ENCODE measurements at regions of chr6 and their contacts with region 1.

Region 1: DNA sequence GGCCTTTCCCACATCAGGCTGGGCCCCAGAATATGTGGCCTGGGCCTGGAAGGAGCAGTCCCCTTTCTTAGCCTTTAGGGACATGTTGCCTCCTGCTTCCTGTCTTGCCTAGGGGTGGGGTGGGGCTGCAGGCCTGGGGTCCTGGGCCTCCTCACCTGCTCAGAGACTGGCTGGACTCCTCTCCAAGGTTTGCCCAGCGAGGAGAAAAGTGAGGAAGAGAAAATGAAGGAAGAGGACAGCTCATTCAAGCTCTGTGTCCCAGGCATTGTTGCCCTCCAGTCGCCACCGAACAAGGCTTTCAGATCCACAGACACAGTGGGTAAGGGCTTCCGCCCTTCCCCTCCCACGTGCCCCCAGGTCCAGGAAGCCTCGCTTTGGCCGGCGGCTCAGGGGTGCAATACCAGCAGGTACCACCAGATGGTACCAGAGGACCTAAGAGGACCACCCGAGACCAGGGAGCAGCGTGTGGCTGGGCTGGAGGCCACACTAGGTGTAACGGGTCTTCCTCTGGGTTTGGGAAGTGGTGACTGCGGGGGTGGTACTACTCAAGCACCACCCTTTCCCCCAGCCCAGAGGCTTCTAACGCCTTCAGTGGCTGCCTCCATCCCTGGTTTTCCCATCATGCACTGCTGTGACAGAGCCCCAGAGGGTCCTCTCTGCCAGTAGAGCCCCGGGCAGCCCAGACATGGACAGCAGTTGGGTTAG is 5.5 kb upstream of the BAK1 start:
- DNase-seq: peak; percentile 83 to 84
- ATAC-seq: peak; percentile 59 to 73 (median 68)
- H3K4me3 ChIP-seq: peak overlapping the region in 4 of 10 donors; percentile 8 to 23 (median 16)
- H3K27ac ChIP-seq: peak overlapping the region in 8 of 10 donors; percentile 2 to 58 (median 30)
- H3K4me1 ChIP-seq: peaks cover 12 to 40% (median 31%) of the 10 kb centered on the region in 9 donors
- H3K27me3 ChIP-seq: no peaks in the 10 kb centered on the region
- CTCF ChIP-seq: peak; percentile 96 to 100 (median 99)

Region 2: GRCh38 chr6:33607784-33608161 is 22.2 kb after region 1 on chr6:
- intact Hi-C with region 1: loop called in 2 of 10 experiments (anchors 1 to 2 kb)
- DNase-seq: no peak
- ATAC-seq: no peak
- H3K4me3 ChIP-seq: no peak overlapping the region
- H3K27ac ChIP-seq: no peak overlapping the region
- H3K4me1 ChIP-seq: peaks cover 11 to 49% (median 30%) of the 10 kb centered on the region in 9 donors
- H3K27me3 ChIP-seq: no peaks in the 10 kb centered on the region
- CTCF ChIP-seq: peak in 4 of 9 donors; percentile 10 to 34 (median 14)

Region 3: DNA sequence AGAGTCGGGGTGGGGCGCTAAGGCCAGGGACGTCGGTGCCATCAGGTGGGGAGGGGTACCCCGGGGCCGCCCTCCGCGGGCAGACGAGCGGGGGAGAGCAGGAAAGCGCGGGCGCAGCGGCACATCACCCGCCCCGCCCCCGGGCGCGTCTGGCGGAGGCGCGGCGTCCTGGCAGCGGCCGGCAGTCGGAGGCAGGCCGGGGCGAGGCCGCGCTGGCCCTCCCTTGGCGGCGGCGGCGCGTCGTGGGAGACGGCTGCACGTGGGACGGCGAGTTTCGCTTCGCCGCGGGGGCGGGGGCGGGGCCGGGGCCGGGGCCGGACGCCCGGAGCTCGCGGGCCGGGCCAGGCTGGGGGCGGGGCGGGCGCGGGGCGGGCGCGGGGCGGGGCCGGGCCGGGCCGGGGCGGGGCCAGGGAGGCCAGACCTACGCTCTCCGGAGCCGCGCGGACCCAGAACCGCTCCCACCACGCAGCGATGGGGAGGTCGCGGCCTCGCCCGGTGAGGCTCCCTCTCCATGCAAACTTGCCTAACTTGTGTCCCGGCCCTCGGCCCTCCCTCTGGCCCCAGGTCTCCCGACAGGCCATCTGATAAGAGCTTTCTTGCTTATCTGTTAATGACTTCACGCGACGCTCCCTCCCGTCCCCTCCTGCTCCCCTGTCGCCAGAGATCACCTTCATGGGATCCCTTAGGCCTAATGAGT is 48.1 kb after region 1 on chr6:
- intact Hi-C with region 1: loop called in 6 of 10 experiments (anchors 2 to 10 kb)
- DNase-seq: peak; percentile 65 to 79
- ATAC-seq: peak; percentile 78 to 89 (median 86)
- H3K4me3 ChIP-seq: peak overlapping the region in 9 of 10 donors; percentile 30 to 55 (median 48)
- H3K27ac ChIP-seq: peak overlapping the region in 8 of 10 donors; percentile 35 to 69 (median 54)
- H3K4me1 ChIP-seq: peaks cover 9 to 30% (median 24%) of the 10 kb centered on the region in 9 donors
- H3K27me3 ChIP-seq: peaks cover 0 to 13% (median 0%) of the 10 kb centered on the region in 7 donors
- CTCF ChIP-seq: no peak

Region 4: GRCh38 chr6:33700391-33701050 is 115.0 kb after region 1 on chr6:
- intact Hi-C with region 1: loop called (anchors 1 to 10 kb)
- DNase-seq: peak; percentile 61 to 62
- ATAC-seq: peak in 7 of 8 donors; percentile 22 to 66 (median 50)
- H3K4me3 ChIP-seq: no peak overlapping the region
- H3K27ac ChIP-seq: peak overlapping the region in 4 of 10 donors; percentile 19 to 60 (median 24)
- H3K4me1 ChIP-seq: peaks cover 18 to 69% (median 46%) of the 10 kb centered on the region in 9 donors
- H3K27me3 ChIP-seq: no peaks in the 10 kb centered on the region
- CTCF ChIP-seq: peak; percentile 38 to 77 (median 68)

Region 5: GRCh38 chr6:33761922-33762629 is 176.5 kb after region 1 on chr6:
- intact Hi-C with region 1: loop called (anchors 1 to 10 kb)
- DNase-seq: peak; percentile 80 to 87
- ATAC-seq: peak; percentile 85 to 95 (median 91)
- H3K4me3 ChIP-seq: peak overlapping the region in 1 of 10 donors; percentile 3
- H3K27ac ChIP-seq: peak overlapping the region; percentile 14 to 82 (median 71)
- H3K4me1 ChIP-seq: peaks cover 2 to 30% (median 19%) of the 10 kb centered on the region in 9 donors
- H3K27me3 ChIP-seq: no peaks in the 10 kb centered on the region
- CTCF ChIP-seq: peak; percentile 44 to 78 (median 66)

Region 6: DNA sequence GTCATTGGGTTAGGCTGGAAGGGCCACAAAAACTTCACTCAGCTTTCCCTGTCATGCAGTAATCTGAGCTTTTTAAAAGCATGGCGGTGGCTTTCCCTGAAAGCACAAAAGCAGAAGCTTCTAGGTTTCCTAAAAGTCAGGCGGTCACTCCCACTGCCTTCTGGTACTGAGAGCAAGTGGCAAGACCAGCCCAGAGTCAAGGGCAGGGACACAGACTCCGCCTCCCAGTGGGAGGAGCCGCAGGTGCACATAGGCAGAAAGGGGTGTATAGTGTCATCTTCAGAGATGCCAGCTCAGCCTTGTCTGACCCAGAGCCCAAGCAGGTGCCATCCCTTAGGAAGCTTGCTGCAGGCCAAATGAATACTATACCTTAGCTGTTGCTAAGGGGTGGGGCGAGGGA is 862.4 kb after region 1 on chr6:
- intact Hi-C with region 1: no loop called
- DNase-seq: no peak
- ATAC-seq: peak in 1 of 8 donors; percentile 21
- H3K4me3 ChIP-seq: no peak overlapping the region
- H3K27ac ChIP-seq: no peak overlapping the region
- H3K4me1 ChIP-seq: no peaks in the 10 kb centered on the region
- H3K27me3 ChIP-seq: no peaks in the 10 kb centered on the region
- CTCF ChIP-seq: no peak